Panc1 (cell line): ENCODE measurements at regions of chr2 and their contacts with region 1.

Region 1: GRCh38 chr2:32496662-32497061 is 131.2 kb upstream of the TTC27 start:
- DNase-seq: no peak
- ATAC-seq: no peak
- H3K4me3 ChIP-seq: no peak overlapping the region
- H3K27ac ChIP-seq: no peak overlapping the region
- H3K4me1 ChIP-seq: no peaks in the 10 kb centered on the region
- H3K27me3 ChIP-seq: no peaks in the 10 kb centered on the region
- CTCF ChIP-seq: no peak

Region 2: GRCh38 chr2:32314886-32315285 is 181.8 kb before region 1 on chr2:
- CTCF ChIA-PET with region 1: no interaction called
- POLR2A ChIA-PET with region 1: no interaction called
- in situ Hi-C with region 1: no loop called
- intact Hi-C with region 1: no loop called
- DNase-seq: no peak
- ATAC-seq: no peak
- H3K4me3 ChIP-seq: no peak overlapping the region
- H3K27ac ChIP-seq: no peak overlapping the region
- H3K4me1 ChIP-seq: no peaks in the 10 kb centered on the region
- H3K27me3 ChIP-seq: no peaks in the 10 kb centered on the region
- CTCF ChIP-seq: no peak

Region 3: DNA sequence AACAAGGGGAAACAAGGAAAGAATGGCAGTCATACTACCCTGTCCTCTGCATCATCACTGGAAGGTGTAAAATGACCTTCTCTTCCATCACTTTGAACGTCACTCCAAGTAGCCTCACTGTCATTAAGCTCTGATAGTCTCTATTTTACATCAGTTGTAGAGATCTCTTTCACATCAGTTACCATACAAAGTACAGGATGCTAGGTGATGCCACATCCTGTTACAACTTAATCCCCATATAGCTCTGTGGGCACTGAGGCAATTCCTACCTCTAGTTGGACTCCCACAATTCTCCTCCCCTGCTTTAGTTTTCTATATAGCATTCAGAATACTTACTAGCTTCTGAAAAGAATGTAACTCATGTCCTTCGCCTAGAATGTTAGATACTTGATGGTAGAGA is 76.1 kb after region 1 on chr2:
- CTCF ChIA-PET with region 1: no interaction called
- POLR2A ChIA-PET with region 1: interaction called, 10 read pairs
- in situ Hi-C with region 1: no loop called
- intact Hi-C with region 1: no loop called
- DNase-seq: no peak
- ATAC-seq: no peak
- H3K4me3 ChIP-seq: no peak overlapping the region
- H3K27ac ChIP-seq: no peak overlapping the region
- H3K4me1 ChIP-seq: no peaks in the 10 kb centered on the region; the same call in 1 of the 2 replicates
- H3K27me3 ChIP-seq: no peaks in the 10 kb centered on the region
- CTCF ChIP-seq: no peak